Heart left ventricle (tissue), 16 donors: ENCODE measurements at regions of chr4 and their contacts with region 1.

Region 1: GRCh38 chr4:130143656-130144055 is 1047.7 kb downstream of the C4orf33 start:
- DNase-seq: no peak
- ATAC-seq: no peak
- H3K4me3 ChIP-seq: no peak overlapping the region
- H3K27ac ChIP-seq: no peak overlapping the region
- H3K4me1 ChIP-seq: no peaks in the 10 kb centered on the region
- H3K27me3 ChIP-seq: no peaks in the 10 kb centered on the region
- CTCF ChIP-seq: no peak
- POLR2A ChIP-seq: no peak

Region 2: GRCh38 chr4:130092187-130093015 is 51.3 kb before region 1 on chr4:
- intact Hi-C with region 1: no loop called
- DNase-seq: no peak
- ATAC-seq: no peak
- H3K4me3 ChIP-seq: no peak overlapping the region
- H3K27ac ChIP-seq: no peak overlapping the region
- H3K4me1 ChIP-seq: no peaks in the 10 kb centered on the region
- H3K27me3 ChIP-seq: no peaks in the 10 kb centered on the region
- CTCF ChIP-seq: no peak
- POLR2A ChIP-seq: no peak

Region 3: GRCh38 chr4:130110189-130110588 is 33.5 kb before region 1 on chr4:
- intact Hi-C with region 1: loop called in 1 of 10 experiments (anchors 2 kb)
- DNase-seq: no peak
- ATAC-seq: no peak
- H3K4me3 ChIP-seq: no peak overlapping the region
- H3K27ac ChIP-seq: no peak overlapping the region
- H3K4me1 ChIP-seq: no peaks in the 10 kb centered on the region
- H3K27me3 ChIP-seq: no peaks in the 10 kb centered on the region
- CTCF ChIP-seq: no peak
- POLR2A ChIP-seq: no peak

Region 4: DNA sequence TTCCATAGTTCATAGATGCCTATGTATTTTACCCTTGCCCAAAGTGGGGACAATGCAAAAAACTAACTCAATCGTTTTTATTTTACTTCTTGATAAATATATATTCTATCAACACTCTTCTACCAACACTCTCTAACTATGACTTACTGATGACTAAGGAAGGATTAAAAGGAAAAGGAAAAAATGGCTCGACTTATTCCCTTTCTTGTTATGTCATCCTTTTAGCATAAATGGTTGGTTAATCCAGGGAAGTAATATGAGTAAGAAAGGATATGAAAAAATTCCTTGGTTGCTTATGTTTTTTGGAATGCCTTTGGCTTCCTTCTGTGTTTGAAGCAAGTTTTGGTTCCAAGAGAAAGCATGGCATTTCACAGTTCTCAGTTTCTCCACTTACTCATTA is 39.4 kb after region 1 on chr4:
- intact Hi-C with region 1: no loop called
- DNase-seq: no peak
- ATAC-seq: no peak
- H3K4me3 ChIP-seq: no peak overlapping the region
- H3K27ac ChIP-seq: no peak overlapping the region
- H3K4me1 ChIP-seq: no peaks in the 10 kb centered on the region
- H3K27me3 ChIP-seq: no peaks in the 10 kb centered on the region
- CTCF ChIP-seq: no peak
- POLR2A ChIP-seq: no peak

Region 5: GRCh38 chr4:130233377-130234047 is 89.9 kb after region 1 on chr4:
- intact Hi-C with region 1: no loop called
- DNase-seq: no peak
- ATAC-seq: no peak
- H3K4me3 ChIP-seq: peak overlapping the region in 1 of 12 donors; percentile 22
- H3K27ac ChIP-seq: no peak overlapping the region
- H3K4me1 ChIP-seq: no peaks in the 10 kb centered on the region
- H3K27me3 ChIP-seq: no peaks in the 10 kb centered on the region
- CTCF ChIP-seq: no peak
- POLR2A ChIP-seq: no peak

Region 6: DNA sequence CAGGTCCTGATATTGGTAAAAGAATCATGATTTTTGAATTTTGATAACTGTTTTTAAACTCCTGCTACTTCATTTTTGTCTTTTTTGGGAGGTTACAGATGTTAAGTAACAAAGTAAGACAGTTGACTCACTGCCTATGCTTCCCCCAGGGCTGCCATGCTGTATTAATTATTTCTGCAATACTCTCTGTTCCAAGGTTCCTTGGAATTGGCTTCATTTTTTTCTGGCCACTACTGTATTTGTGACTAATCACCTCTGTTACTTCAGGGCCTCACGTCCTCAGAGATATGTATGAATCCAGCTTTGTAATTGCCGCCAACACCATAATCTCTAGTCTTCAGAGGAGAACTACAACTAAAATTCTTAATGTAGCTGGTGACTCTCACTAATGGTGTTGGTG is 681.6 kb after region 1 on chr4:
- intact Hi-C with region 1: no loop called
- DNase-seq: no peak
- ATAC-seq: peak in 2 of 4 donors; percentile 48 to 77
- H3K4me3 ChIP-seq: no peak overlapping the region
- H3K27ac ChIP-seq: no peak overlapping the region
- H3K4me1 ChIP-seq: no peaks in the 10 kb centered on the region
- H3K27me3 ChIP-seq: no peaks in the 10 kb centered on the region
- CTCF ChIP-seq: no peak
- POLR2A ChIP-seq: no peak